Right ventricle myocardium superior (tissue), 1 donor: ENCODE measurements at regions of chr9 and their contacts with region 1.

Region 1: DNA sequence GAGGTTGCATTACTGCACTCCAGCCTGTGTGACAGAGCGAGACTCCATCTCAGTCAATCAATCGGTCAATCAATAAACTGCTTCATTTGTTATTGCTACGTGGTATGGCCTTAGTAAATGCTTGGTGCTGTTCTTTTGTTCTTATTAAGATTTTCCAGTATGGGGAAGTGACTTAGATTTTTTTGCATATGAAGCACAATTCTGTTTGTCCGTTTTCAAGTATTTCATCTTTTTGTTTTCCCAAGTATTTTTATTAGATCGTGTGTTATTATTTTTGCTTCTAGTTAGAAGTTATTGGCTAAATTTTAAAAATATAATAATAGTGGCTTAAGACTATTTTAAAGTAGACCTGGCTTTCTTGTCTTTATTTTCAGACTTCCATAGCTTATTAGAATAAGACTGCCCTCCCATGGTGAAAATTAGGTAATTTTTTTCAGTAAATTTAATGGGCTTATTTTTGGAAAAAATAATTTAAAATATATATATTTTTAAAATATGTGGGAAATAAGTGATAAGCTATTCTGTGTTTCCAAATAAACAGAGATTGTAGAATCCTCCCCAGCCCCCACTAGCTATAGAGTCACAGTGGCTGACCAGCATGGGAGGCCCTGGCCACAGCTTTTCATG is 14.7 kb upstream of the OMD start:
- DNase-seq: no peak
- ATAC-seq: no peak

Region 2: DNA sequence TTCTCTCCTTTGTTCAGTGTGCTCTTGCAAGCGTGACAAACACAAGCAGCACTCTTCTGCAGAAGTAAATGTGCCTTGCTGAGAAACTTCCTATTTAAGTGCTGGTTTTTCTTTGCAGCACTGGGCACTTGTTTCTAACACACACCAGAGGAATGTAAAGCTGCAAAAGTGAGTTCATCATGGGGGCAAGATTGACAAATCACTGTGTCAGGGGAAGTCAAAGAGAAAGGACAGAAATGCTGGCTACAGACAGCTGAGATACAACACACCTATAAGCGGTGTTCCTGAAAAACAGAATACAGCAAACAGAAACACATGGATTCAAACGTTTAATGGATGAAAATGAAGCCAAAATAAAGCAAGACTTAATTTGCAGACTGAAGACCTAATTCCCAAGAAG is 508.5 kb before region 1 on chr9:
- intact Hi-C with region 1: no loop called
- DNase-seq: no peak
- ATAC-seq: no peak

Region 3: DNA sequence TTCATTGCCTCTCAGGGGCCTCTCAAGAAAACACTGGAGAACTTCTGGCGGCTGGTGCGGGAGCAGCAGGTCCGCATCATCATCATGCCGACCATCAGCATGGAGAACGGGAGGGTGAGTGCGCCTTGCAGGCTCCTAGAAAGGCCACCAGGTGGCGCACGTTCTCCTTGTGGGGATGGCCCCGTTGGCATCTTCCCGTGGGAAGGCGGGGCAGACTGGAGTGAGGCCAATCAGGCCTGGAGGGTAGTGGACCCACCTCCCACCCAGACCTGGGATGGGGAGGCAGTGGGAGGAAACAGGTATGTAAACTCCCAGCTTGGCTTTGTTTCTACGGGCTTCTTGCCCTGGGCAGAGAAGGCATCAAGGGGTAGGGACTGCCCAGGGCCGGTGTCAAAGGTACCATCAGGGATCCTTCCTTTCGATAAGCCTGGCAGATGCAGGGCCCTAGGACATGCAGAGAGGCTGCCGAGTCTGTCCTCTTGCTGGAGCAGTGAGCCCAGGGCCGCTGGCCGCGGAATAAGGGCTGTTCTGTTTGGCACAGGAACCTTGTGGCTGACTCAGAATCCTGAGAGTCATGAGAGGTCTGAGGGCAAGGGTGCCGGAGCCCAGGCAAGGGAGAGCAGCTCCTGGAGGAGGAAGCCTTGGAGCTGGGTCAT is 304.9 kb before region 1 on chr9:
- intact Hi-C with region 1: loop called (anchors 10 kb)
- DNase-seq: peak; percentile 90
- ATAC-seq: peak; percentile 87